ENCODE measurements at regions of chr5 and their contacts with region 1.

Region 1: GRCh38 chr5:147558826-147559225 is 49.0 kb upstream of the DPYSL3 start:
- DNase-seq: peak; percentile 55 to 65
- H3K4me3 ChIP-seq: no peak overlapping the region
- H3K4me3 Mint-ChIP-seq: no peak overlapping the region
- H3K27ac Mint-ChIP-seq: no peak overlapping the region
- H3K4me1 ChIP-seq: 0 out of 2 replicates have a peak, but pooled peaks cover 8% of the 10 kb centered on the region
- H3K4me1 Mint-ChIP-seq: peaks cover 12% of the 10 kb centered on the region
- H3K27me3 ChIP-seq: no peaks in the 10 kb centered on the region
- H3K27me3 Mint-ChIP-seq: no peaks in the 10 kb centered on the region
- CTCF ChIP-seq: peak; percentile 59 to 74

Region 2: GRCh38 chr5:147223948-147224791 is 334.7 kb before region 1 on chr5:
- CTCF ChIA-PET with region 1: interaction called, 6 read pairs
- POLR2A ChIA-PET with region 1: no interaction called
- intact Hi-C with region 1: loop called (anchors 1 kb)
- DNase-seq: peak; percentile 42 to 67
- H3K4me3 ChIP-seq: no peak overlapping the region
- H3K4me3 Mint-ChIP-seq: no peak overlapping the region
- H3K27ac Mint-ChIP-seq: no peak overlapping the region
- H3K4me1 ChIP-seq: no peaks in the 10 kb centered on the region
- H3K4me1 Mint-ChIP-seq: no peaks in the 10 kb centered on the region
- H3K27me3 ChIP-seq: no peaks in the 10 kb centered on the region
- H3K27me3 Mint-ChIP-seq: no peaks in the 10 kb centered on the region
- CTCF ChIP-seq: peak; percentile 70 to 78

Region 3: DNA sequence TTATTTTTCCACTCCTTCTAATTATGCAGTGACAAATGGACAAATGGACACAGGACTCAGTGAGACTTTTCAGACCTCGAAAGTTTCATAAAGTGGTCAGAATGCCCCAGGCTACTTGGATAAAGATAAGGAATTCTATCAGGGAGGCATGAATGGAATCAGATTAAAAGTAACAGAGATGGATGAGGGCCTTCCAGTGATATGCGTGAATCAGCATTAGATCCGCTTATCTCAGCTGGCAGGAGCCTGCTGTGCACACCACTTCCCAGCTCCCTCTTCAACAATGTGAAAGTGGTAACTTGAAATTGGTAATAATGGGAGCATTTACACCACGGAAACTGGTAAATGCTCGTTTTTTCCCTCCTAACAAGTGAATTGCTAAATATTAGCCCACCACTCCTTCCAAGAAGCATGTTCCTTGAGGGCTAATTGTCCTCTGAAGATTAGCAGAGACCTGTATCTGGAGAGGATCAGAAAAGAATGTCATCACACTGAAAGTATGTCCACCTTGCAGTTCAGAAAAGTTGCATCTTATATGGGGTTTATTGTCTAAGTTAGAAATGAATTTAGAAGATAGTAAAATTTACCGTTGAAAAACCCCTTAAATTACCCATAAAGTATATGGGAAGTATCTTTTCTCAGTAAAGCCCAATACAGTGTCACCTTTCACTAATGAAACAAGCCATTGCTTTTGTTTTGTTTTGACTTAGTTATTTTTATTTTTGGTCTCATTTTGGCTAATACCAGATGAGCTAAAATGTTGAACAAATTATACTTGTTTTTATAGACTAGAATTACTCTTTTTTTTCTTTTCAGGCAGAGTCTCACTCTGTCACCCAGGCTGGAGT is 174.3 kb before region 1 on chr5:
- CTCF ChIA-PET with region 1: no interaction called
- POLR2A ChIA-PET with region 1: no interaction called
- intact Hi-C with region 1: loop called (anchors 5 kb)
- DNase-seq: no peak
- H3K4me3 ChIP-seq: no peak overlapping the region
- H3K4me3 Mint-ChIP-seq: no peak overlapping the region
- H3K27ac Mint-ChIP-seq: no peak overlapping the region
- H3K4me1 ChIP-seq: no peaks in the 10 kb centered on the region; the same call in 1 of the 2 replicates
- H3K4me1 Mint-ChIP-seq: peaks cover 6% of the 10 kb centered on the region
- H3K27me3 ChIP-seq: no peaks in the 10 kb centered on the region
- H3K27me3 Mint-ChIP-seq: no peaks in the 10 kb centered on the region
- CTCF ChIP-seq: no peak

Region 4: DNA sequence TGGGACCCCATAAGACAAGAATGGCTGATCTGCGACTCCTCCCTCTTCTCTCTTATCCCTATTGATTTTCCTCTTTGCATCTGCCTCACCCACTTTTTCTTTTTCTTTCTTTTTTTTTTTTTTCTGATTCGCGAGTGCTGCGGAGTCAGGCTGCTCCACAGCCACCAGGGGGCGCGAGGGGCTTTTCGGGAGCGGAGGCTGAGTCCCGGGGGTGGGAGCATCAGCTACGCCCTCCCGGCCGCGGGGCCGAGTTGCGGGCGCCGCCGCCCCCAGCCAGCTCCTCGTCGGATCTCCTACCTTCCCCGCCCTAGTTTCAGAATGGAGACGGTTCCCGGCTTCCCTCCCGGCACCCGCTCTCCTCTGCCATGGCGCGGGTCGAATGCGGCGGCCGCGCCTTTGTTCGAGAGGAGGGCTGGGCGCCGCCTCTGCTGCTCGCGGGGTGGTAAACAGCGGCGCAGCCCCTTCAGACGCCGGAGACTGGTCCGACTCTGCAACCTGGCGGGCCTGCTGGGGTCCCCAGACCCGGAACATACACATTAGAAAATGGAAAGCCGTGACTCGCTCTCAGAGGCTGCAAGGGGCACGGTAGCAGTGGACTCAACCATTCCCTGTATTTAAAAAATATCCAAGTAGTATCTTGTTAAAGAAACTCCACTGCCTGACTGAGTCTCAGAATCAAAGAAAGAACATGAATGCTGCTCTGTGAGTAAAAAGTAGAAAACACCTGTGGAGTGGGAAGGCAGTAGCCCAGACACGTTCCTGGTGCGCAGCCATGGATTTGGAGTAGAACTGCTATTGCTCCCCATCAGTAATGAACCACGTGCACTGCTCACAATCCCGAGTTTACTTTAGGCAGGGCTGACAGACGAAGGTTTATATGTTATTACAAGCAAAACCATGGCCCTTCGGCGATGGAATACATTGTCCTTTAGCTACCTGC is 104.7 kb before region 1 on chr5:
- CTCF ChIA-PET with region 1: interaction called, 30 read pairs
- POLR2A ChIA-PET with region 1: no interaction called
- intact Hi-C with region 1: loop called (anchors 1 kb)
- DNase-seq: peak; percentile 88 to 94
- H3K4me3 ChIP-seq: peak overlapping the region; percentile 92
- H3K4me3 Mint-ChIP-seq: peak overlapping the region; percentile 85
- H3K27ac Mint-ChIP-seq: peak overlapping the region; percentile 73
- H3K4me1 ChIP-seq: peaks cover 29% of the 10 kb centered on the region
- H3K4me1 Mint-ChIP-seq: peaks cover 23% of the 10 kb centered on the region
- H3K27me3 ChIP-seq: no peaks in the 10 kb centered on the region
- H3K27me3 Mint-ChIP-seq: no peaks in the 10 kb centered on the region
- CTCF ChIP-seq: peak; percentile 93 to 95

Region 5: GRCh38 chr5:147464211-147464610 is 94.6 kb before region 1 on chr5:
- CTCF ChIA-PET with region 1: interaction called, 8 read pairs
- POLR2A ChIA-PET with region 1: no interaction called
- intact Hi-C with region 1: loop called (anchors 1 kb)
- DNase-seq: peak in 1 of 2 experiments; percentile 60
- H3K4me3 ChIP-seq: no peak overlapping the region
- H3K4me3 Mint-ChIP-seq: no peak overlapping the region
- H3K27ac Mint-ChIP-seq: no peak overlapping the region
- H3K4me1 ChIP-seq: peaks cover 10% of the 10 kb centered on the region
- H3K4me1 Mint-ChIP-seq: no peaks in the 10 kb centered on the region
- H3K27me3 ChIP-seq: no peaks in the 10 kb centered on the region
- H3K27me3 Mint-ChIP-seq: no peaks in the 10 kb centered on the region
- CTCF ChIP-seq: peak in 1 of 2 experiments; percentile 53